ENCODE measurements at regions of chr1 and their contacts with region 1.

Region 1: DNA sequence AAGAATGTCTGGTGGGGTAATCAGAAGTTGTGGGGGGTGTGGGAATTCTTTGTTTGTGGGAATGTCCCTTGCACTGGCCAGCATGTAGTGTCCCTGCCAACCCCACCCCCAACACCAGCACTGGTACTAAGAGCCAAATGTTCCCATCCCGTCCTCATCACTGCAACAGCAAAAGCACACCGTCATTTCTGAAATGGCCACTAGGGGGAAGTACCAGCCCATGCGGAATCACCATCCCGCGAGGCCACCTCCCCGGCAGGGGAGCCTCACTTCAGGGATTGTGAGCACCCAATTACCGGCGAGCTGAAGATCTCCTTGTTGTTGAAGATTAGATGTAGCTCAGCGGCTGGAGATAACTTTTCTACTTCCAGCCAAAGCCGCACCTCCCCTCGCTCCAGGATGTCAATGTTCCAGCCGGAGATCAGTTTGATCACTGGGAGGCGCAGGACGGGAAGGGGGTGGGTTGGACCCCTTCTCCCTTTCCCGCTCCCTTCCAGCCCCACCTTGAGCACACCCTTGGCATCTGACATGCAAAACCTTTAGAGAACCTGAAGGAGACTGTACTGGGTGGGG is 41.0 kb downstream of the MYOM3 start:
- DNase-seq: peak; percentile 74 to 85
- ATAC-seq: peak; percentile 82
- H3K4me3 ChIP-seq: no peak overlapping the region
- H3K27ac ChIP-seq: no peak overlapping the region
- H3K4me1 ChIP-seq: no peaks in the 10 kb centered on the region
- H3K27me3 ChIP-seq: no peaks in the 10 kb centered on the region

Region 2: DNA sequence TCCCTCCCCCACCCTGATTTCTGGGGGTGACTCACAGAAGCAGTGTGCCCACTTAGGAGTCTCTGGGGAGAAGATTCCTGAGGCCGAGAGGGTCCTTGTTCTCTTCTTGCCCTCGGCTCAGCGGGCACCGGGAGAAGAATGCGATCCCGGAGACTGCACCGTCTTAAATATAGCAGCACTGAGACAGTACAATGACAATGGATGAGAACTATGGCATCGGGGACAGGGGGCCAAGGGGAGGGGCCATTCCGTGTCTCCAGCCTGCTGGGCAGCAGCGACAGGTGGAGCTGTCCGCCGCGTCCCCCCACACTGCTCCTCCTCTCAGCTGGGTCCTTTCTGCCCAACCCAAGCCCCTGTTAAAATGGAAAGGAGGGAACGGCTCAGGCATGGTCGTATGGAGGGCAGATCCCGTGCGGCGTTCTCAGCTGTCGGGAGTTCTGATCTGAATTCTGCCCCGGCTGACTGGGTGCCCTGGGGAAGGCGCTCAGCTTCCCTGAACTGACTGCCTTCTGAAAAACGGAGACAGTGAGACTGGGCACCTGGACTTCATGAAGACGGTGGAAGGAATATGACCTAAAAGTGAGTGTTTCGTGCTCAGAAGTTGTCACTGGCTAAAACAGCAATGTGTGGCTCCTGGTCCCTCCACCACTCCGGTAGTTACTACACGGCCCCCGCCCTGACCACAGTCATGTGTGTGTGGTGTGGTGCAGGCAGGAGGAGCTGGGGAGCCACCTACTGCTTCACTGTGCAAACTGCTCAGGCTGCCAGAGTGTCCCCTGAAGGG is 41.3 kb after region 1 on chr1 and contains the start of gene MYOM3:
- intact Hi-C with region 1: loop called (anchors 1 to 2 kb)
- DNase-seq: peak; percentile 87 to 89
- ATAC-seq: peak; percentile 88
- H3K4me3 ChIP-seq: no peak within 1 kb of the TSS
- H3K27ac ChIP-seq: peak within 1 kb of the TSS; percentile 25 to 39
- H3K4me1 ChIP-seq: no peaks in the 10 kb centered on the region
- H3K27me3 ChIP-seq: no peaks in the 10 kb centered on the region
- total RNA-seq, gene MYOM3: 0.78 to 1.9 TPM

Region 3: DNA sequence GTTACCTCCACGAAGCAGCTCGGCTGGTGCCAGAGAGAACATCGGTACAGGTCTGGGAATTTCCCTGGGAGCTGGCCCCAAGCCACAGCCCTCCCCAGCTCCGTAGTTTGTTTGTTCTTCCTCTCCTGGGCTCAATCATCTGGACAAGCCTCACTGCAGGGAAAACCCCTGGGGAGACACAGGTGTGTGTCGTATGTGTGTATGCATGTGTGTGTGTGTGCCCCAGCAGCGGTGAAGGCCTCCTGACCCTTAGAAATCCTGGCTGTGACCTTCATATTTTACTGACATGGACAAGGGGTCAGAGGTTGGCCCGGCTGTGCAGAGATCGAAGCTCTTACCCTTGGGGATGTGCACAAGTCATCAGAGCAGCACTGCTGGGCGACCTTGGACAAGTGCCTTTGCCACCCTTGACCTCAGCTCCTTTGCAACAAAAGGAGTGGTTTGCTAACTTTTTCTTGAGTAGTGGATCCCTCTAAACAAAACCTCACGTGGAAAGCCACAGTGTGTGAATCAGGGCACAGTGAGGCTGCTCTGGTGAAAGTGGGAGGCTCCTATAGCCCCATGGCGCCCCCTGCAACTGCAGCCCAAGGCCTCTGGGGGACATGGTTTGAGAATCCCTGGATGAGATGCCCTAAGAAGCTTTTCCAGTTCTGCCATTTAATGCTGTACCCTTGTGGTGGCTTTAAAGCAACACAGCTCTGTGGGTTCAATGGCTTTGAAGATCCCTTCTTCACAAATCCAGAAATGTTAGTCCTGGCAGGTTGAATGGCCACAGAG is 84.3 kb after region 1 on chr1:
- intact Hi-C with region 1: no loop called
- DNase-seq: no peak
- ATAC-seq: no peak
- H3K4me3 ChIP-seq: no peak overlapping the region
- H3K27ac ChIP-seq: no peak overlapping the region
- H3K4me1 ChIP-seq: no peaks in the 10 kb centered on the region
- H3K27me3 ChIP-seq: no peaks in the 10 kb centered on the region